ENCODE measurements at regions of chr1 and their contacts with region 1.

Region 1: DNA sequence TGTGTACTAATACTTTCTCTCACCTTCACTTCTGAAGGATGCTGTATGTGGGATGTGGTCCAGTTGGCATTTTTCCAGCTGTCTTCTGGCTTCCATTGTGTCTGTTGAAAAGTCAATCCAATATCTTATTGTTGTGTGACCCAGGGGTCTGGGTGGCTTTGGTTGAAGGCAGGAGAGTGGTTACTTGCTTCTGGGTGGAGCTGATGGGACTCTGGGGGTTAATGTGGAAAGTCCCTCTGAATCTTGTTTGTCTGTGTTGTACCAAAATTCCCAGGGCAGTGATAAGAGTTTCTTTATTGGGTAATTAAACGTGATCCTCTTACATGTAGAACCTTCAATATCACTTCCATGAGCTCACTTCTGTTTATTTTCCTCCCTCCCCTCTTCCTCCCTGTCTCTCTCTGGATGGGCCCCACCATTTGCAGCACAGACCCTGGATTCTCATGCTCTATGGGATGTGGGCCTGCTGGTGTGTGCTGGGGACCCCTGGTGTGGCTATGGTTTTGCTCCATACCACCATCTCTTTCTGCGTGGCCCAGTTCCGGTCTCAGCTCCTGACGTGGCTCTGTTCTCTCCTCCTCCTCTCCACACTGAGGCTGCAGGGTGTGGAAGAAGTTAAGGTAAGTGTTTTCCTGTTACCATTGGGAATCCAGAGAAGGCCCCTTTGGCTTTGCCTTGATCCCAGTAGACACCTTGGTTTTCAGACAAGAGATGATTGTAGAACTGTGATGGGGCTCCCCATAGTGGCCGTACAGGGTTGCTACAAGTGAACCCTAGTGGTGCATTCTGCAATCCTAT is 71.5 kb downstream of the HHAT start:
- DNase-seq: peak in 7 of 9 experiments; percentile 14 to 60 (median 23)
- ATAC-seq: peak; percentile 75
- H3K4me3 ChIP-seq: no peak overlapping the region
- H3K4me3 Mint-ChIP-seq: no peak overlapping the region
- H3K27ac ChIP-seq: no peak overlapping the region
- H3K27ac Mint-ChIP-seq: no peak overlapping the region
- H3K4me1 ChIP-seq: no peaks in the 10 kb centered on the region
- H3K4me1 Mint-ChIP-seq: peaks cover 18% of the 10 kb centered on the region
- H3K27me3 ChIP-seq: no peaks in the 10 kb centered on the region
- H3K27me3 Mint-ChIP-seq: no peaks in the 10 kb centered on the region
- CTCF ChIP-seq: peak; percentile 66

Region 2: DNA sequence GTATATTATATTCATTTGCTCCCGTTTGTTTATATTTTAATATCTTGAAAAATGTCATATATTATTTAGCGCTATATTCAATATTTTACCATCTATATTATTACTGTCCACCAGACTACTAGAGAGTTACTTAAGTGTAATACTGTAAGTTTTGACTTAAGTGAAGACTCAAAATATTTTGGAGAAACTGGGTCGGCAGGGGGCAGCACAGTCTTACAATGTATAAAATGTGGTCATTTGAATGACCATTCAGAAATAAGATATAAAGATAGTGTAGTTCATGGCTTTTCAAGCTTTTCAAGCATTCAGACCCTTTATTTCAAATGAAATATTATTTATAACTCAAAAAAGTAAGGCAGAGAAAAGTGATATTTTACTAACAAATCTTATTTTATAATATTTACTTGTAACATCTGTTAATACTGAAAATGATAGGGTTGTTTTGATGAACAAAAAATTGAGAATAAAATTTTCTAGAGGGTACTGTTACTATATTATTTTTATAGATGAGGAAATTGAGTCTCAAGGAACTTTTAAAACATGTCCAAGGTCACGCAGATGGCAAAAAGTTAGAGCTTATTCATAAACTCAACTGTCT is 256.7 kb before region 1 on chr1:
- CTCF ChIA-PET with region 1: no interaction called
- POLR2A ChIA-PET with region 1: no interaction called
- intact Hi-C with region 1: loop called (anchors 5 to 10 kb)
- DNase-seq: peak in 5 of 9 experiments; percentile 7 to 44 (median 20)
- ATAC-seq: no peak
- H3K4me3 ChIP-seq: no peak overlapping the region
- H3K4me3 Mint-ChIP-seq: no peak overlapping the region
- H3K27ac ChIP-seq: no peak overlapping the region
- H3K27ac Mint-ChIP-seq: no peak overlapping the region
- H3K4me1 ChIP-seq: no peaks in the 10 kb centered on the region
- H3K4me1 Mint-ChIP-seq: no peaks in the 10 kb centered on the region
- H3K27me3 ChIP-seq: no peaks in the 10 kb centered on the region
- H3K27me3 Mint-ChIP-seq: peaks cover 12% of the 10 kb centered on the region
- CTCF ChIP-seq: peak; percentile 36

Region 3: GRCh38 chr1:210360852-210361477 is 39.3 kb before region 1 on chr1:
- CTCF ChIA-PET with region 1: no interaction called
- POLR2A ChIA-PET with region 1: no interaction called
- intact Hi-C with region 1: loop called in 1 of 2 experiments (anchors 1 kb)
- DNase-seq: peak in 2 of 9 experiments; percentile 28 to 49
- ATAC-seq: no peak
- H3K4me3 ChIP-seq: no peak overlapping the region
- H3K4me3 Mint-ChIP-seq: no peak overlapping the region
- H3K27ac ChIP-seq: no peak overlapping the region
- H3K27ac Mint-ChIP-seq: no peak overlapping the region
- H3K4me1 ChIP-seq: no peaks in the 10 kb centered on the region
- H3K4me1 Mint-ChIP-seq: no peaks in the 10 kb centered on the region
- H3K27me3 ChIP-seq: no peaks in the 10 kb centered on the region
- H3K27me3 Mint-ChIP-seq: no peaks in the 10 kb centered on the region
- CTCF ChIP-seq: peak; percentile 60

Region 4: GRCh38 chr1:211037095-211037494 is 636.9 kb after region 1 on chr1:
- CTCF ChIA-PET with region 1: no interaction called
- POLR2A ChIA-PET with region 1: no interaction called
- intact Hi-C with region 1: no loop called
- DNase-seq: no peak
- ATAC-seq: no peak
- H3K4me3 ChIP-seq: no peak overlapping the region
- H3K4me3 Mint-ChIP-seq: no peak overlapping the region
- H3K27ac ChIP-seq: no peak overlapping the region
- H3K27ac Mint-ChIP-seq: no peak overlapping the region
- H3K4me1 ChIP-seq: no peaks in the 10 kb centered on the region
- H3K4me1 Mint-ChIP-seq: no peaks in the 10 kb centered on the region
- H3K27me3 ChIP-seq: no peaks in the 10 kb centered on the region
- H3K27me3 Mint-ChIP-seq: peaks cover 8% of the 10 kb centered on the region
- CTCF ChIP-seq: no peak